Mammary epithelial cell (primary cell): ENCODE measurements at regions of chr19 and their contacts with region 1.

Region 1: DNA sequence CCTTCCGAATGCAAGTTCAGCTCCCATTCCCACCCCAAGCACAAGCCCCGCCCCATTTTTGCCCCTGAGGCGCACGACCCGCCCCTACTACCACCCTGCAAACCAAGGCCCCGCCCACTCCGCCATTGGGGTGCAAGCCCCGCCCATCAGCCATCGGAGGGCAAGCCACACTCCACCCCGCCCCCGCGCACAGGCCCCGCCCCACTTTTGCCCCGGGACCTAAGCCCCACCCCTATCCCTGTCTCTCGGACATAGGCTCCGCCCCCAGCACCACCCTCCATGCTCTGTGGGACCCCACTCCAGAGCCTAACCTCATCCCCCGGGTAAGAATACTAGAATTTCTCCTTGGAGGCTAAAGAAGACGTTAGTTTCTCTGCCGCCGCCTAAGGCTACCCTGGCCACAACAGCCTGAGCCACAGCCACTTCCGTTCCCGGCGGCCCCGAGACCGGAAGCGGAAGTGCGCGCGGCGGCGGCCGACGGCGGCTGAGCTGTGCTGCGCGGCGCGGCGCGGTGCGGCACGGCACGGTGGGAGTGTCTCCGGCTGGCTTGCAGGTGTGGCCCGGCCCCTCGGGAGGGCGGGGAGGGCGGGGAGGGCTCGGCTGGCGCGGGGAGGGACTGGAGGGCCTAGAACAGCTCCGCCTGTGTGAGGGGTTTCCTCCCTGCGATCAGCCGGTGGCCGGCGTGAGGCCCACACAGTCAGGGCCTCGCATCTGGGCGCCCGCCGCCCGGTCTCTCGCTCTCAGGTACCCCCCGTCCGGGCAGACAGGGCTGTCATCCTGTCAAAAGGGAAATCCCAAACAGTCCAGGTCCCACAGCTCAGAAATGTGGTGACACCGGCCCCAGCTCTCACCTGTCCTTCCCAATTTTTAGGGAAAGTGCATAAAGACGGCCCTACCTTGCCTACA is at the start of gene ZNF333:
- DNase-seq: peak; percentile 86
- H3K4me3 ChIP-seq: peak within 1 kb of the TSS; percentile 91 to 98 (median 93)
- H3K27ac ChIP-seq: peak within 1 kb of the TSS; percentile 91
- H3K4me1 ChIP-seq: no peaks in the 10 kb centered on the region
- H3K27me3 ChIP-seq: no peaks in the 10 kb centered on the region
- CTCF ChIP-seq: no peak
- total RNA-seq, gene ZNF333: 5.3 TPM

Region 2: GRCh38 chr19:14147797-14148605 is 541.9 kb before region 1 on chr19:
- CTCF ChIA-PET with region 1: no interaction called
- dilution Hi-C with region 1: no loop called
- in situ Hi-C with region 1: no loop called
- intact Hi-C with region 1: loop called (anchors 5 kb)
- DNase-seq: peak; percentile 17
- H3K4me3 ChIP-seq: no peak overlapping the region
- H3K27ac ChIP-seq: no peak overlapping the region
- H3K4me1 ChIP-seq: peaks cover 7% of the 10 kb centered on the region
- H3K27me3 ChIP-seq: no peaks in the 10 kb centered on the region
- CTCF ChIP-seq: peak; percentile 51 to 90

Region 3: DNA sequence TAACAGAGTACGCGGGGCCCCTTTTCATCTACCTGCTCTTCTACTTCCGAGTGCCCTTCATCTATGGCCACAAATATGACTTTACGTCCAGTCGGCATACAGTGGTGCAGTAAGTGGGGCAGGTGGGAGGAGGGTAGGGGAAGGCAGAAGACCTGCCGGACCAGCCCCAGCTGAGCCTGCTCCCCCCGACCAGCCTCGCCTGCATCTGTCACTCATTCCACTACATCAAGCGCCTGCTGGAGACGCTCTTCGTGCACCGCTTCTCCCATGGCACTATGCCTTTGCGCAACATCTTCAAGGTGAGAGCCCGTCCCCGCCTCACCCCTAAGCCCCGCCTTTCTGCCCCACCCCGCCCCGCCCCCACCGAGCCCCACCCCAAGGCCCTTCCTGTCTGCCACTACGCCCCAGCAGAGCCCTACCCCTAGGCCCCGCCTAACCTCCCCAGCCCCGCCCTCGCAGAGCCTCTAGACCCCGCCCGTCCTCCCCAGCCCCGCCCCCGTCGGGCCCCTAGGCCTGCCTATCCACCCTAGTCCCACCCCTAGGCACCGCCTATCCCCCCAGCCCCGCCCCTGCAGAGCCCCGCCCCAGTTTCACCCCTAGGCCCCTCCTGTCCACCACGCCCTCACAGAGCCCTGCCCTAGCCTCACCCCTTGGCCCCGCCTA is 125.7 kb before region 1 on chr19:
- CTCF ChIA-PET with region 1: interaction called, 5 read pairs
- dilution Hi-C with region 1: loop called (anchors 5 kb)
- in situ Hi-C with region 1: no loop called
- intact Hi-C with region 1: no loop called
- DNase-seq: peak; percentile 45
- H3K4me3 ChIP-seq: no peak overlapping the region
- H3K27ac ChIP-seq: no peak overlapping the region
- H3K4me1 ChIP-seq: peaks cover 46% of the 10 kb centered on the region
- H3K27me3 ChIP-seq: no peaks in the 10 kb centered on the region
- CTCF ChIP-seq: no peak

Region 4: GRCh38 chr19:14571695-14572490 is 118.0 kb before region 1 on chr19 and contains the start of gene NDUFB7:
- CTCF ChIA-PET with region 1: interaction called, 30 read pairs
- dilution Hi-C with region 1: loop called (anchors 5 kb)
- in situ Hi-C with region 1: loop called (anchors 5 kb)
- intact Hi-C with region 1: loop called (anchors 1 kb)
- DNase-seq: peak; percentile 94
- H3K4me3 ChIP-seq: peak within 1 kb of the TSS; percentile 67 to 100 (median 99)
- H3K27ac ChIP-seq: peak within 1 kb of the TSS; percentile 70
- H3K4me1 ChIP-seq: peaks cover 14% of the 10 kb centered on the region
- H3K27me3 ChIP-seq: no peaks in the 10 kb centered on the region
- CTCF ChIP-seq: peak; percentile 68 to 85
- total RNA-seq, gene NDUFB7: 142 to 177 TPM

Region 5: DNA sequence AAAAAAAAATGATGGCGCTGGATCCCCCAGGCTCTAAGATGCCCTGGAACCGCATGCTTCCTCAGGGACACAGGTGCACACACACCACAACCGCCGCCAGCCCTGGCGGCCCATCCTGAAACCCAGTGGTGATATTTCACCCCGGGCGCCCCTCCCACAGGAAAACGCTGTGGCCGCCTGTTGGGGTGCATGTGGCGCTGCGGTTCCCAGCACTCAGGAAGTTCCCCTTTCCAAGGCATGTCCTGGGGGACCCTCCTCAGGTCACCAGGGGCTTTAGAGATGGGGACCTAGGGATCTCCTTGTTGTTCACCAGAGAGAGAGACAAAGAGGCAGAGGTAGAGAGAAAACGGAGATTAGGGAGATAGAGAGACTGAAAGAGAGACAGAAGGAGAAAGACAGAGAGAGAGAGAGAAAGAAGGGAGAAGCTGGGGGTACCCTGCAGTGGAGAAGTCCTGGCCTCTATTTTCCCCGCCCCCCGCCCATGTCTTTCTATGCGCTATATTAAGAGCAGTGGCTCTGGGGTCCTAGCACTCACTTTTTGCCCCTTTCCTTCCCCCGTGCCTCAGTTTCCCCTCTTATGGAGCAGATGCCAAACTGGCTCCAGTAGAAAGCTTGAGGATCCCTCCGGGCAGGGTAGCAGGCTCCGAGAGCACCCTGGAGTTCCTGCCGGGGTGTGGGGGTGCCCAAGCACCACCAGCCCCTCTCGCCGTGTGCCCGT is 86.2 kb after region 1 on chr19:
- CTCF ChIA-PET with region 1: no interaction called
- dilution Hi-C with region 1: no loop called
- in situ Hi-C with region 1: no loop called
- intact Hi-C with region 1: loop called (anchors 5 kb)
- DNase-seq: no peak
- H3K4me3 ChIP-seq: peak overlapping the region; percentile 56 to 70 (median 58)
- H3K27ac ChIP-seq: peak overlapping the region; percentile 22
- H3K4me1 ChIP-seq: peaks cover 3% of the 10 kb centered on the region
- H3K27me3 ChIP-seq: no peaks in the 10 kb centered on the region
- CTCF ChIP-seq: no peak

Region 6: GRCh38 chr19:14890643-14891379 is 201.0 kb after region 1 on chr19:
- CTCF ChIA-PET with region 1: no interaction called
- dilution Hi-C with region 1: no loop called
- in situ Hi-C with region 1: no loop called
- intact Hi-C with region 1: loop called (anchors 5 kb)
- DNase-seq: no peak
- H3K4me3 ChIP-seq: no peak overlapping the region
- H3K27ac ChIP-seq: no peak overlapping the region
- H3K4me1 ChIP-seq: no peaks in the 10 kb centered on the region
- H3K27me3 ChIP-seq: no peaks in the 10 kb centered on the region
- CTCF ChIP-seq: no peak